AG04449 (cell line): ENCODE measurements at regions of chr4 and their contacts with region 1.

Region 1: DNA sequence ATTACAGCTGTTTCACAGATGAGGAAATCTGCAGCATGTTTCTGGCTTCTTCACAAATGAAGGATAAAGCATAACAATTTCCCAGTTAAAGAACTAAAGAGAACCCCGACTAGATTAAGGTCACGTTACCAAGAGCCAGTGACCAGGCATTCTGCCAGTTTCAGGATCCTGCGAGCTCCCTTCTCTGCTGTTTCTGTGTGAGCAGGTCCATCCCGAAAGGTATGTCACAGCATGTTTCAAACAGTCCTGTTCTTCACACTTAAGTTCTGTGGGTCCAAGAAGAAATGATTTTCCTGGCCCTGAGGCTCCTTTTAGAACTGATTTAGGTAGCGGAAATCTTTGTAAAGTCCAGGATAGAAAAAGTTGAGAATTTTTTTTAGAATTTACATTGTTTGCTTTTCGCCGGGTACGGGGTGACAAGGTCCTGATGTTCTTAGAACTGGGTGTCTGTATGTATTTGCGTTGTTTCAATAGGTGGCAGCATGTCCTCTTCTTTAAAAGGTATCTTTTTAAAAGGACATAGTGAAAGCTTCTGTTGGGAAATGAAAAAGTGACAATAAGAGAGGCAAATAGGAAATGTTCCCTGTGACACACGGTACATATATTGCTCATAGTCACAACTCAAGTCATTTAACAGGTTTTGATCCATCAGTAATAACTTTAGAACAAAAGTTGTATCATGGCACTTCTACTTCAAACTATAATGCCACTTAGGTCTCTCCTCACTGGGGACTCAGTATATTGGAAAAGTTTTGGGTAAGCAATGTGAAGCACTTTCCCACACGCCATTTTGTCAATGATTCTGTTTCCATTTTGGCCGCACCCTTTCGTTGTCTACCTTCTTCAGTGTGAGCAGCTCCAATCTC is 18.4 kb downstream of the IL21 start:
- DNase-seq: no peak
- H3K4me3 ChIP-seq: no peak overlapping the region
- CTCF ChIP-seq: peak; percentile 20

Region 2: DNA sequence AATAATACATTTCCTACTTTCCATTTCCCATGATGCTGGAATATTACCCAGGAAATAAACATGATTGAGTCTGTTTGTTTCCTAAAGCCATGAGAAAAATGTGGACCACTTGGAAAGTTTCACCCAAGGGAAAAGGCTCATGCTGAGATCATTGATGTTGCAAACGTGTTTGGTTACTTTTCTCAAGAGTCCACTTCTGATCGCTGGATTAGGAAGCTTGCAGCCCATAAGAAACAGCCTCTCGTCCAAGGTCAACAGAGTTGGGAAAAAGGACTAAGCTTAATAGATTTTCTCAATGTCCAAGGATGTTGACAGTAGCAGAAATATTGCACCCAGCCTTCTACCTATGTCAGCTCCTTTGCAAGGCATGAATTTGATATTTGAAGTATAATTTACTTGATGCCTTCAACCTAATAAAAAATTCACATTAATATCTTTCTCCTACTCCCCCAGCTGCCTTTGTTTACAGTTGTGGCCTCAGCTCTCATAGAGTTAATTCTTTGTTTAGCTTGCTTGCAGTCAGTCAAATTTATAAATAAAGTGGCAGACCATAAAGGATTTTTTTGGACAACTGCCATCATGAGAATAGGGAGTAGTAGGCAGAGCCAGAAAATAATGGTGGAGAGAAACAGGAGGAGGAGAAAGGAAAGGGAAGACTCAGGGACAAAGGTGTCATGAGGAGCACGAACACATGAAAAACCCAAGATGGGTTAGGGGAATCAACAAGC is 516.0 kb before region 1 on chr4:
- CTCF ChIA-PET with region 1: no interaction called
- POLR2A ChIA-PET with region 1: no interaction called
- DNase-seq: no peak
- H3K4me3 ChIP-seq: no peak overlapping the region
- CTCF ChIP-seq: no peak

Region 3: GRCh38 chr4:122612540-122612939 is 10.0 kb after region 1 on chr4:
- CTCF ChIA-PET with region 1: interaction called, 20 read pairs
- POLR2A ChIA-PET with region 1: no interaction called
- DNase-seq: no peak
- H3K4me3 ChIP-seq: no peak overlapping the region
- CTCF ChIP-seq: no peak

Region 4: DNA sequence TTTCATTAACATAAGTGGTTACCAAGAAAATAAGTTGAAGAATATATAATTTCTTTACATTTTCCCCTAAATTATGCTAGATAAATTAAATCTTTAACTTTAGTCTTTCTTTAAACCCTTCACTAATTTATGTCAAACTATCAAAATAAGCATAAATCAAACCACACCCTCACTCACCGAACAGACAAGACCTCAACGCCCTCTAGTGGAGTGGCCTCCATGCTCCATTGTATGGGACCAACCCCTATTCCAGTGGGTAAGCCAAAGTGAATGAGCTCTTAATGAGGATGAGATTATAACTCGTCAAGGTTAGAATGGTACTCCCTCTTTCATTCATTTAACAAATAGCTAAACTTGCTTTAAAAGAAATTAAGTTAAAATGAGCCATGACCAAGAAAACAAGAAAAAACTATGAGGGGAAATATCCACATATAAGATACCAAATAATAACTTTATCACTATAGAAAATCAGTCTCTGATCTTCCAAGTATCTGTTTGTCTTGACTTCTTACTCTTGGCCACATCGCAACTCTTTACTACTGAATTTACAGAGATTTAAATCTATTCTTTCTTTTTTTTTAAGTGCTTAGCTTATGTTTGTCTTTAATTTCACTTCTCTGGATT is 114.4 kb after region 1 on chr4:
- CTCF ChIA-PET with region 1: interaction called, 78 read pairs
- POLR2A ChIA-PET with region 1: no interaction called
- DNase-seq: no peak
- H3K4me3 ChIP-seq: no peak overlapping the region
- CTCF ChIP-seq: peak; percentile 83

Region 5: GRCh38 chr4:122922877-122923511 is 320.5 kb after region 1 on chr4:
- CTCF ChIA-PET with region 1: interaction called, 25 read pairs
- POLR2A ChIA-PET with region 1: no interaction called
- DNase-seq: no peak
- H3K4me3 ChIP-seq: peak overlapping the region; percentile 79
- CTCF ChIP-seq: no peak